Vagina (tissue), 2 donors: ENCODE measurements at regions of chr19 and their contacts with region 1.

Region 1: GRCh38 chr19:46860125-46860845 is 512 bp upstream of the ARHGAP35 start:
- DNase-seq: peak in 1 of 2 donors; percentile 98
- H3K4me3 ChIP-seq: peak overlapping the region; percentile 61 to 79
- H3K27ac ChIP-seq: peak overlapping the region; percentile 96
- H3K4me1 ChIP-seq: peaks cover 59% of the 10 kb centered on the region
- H3K27me3 ChIP-seq: no peaks in the 10 kb centered on the region
- CTCF ChIP-seq: no peak
- POLR2A ChIP-seq: peak in 1 of 2 donors; percentile 28

Region 2: GRCh38 chr19:46904114-46905060 is 44.1 kb after region 1 on chr19:
- intact Hi-C with region 1: loop called (anchors 5 kb)
- DNase-seq: no peak
- H3K4me3 ChIP-seq: no peak overlapping the region
- H3K27ac ChIP-seq: peak overlapping the region; percentile 45
- H3K4me1 ChIP-seq: peaks cover 82% of the 10 kb centered on the region
- H3K27me3 ChIP-seq: no peaks in the 10 kb centered on the region
- CTCF ChIP-seq: no peak
- POLR2A ChIP-seq: no peak

Region 3: DNA sequence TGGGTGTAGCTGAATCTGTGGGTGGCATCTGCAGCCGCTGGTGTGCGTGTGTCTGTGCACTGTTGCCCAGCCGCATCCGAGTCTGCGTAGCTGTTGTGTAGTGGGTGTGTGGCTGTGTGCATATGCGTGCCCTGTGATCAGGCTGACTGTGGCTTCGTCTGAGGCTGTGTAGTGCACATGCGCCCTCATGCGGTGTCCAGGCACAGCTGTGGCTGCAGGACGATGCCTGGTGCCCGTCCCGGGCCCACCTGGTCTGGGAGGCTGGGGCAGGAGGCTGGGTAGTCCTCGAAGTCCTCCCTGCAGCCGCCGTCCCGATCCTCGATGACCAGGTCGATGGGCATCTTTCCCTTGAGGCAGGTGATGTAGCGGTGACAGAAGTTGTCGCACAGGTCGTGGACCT is 554.2 kb after region 1 on chr19:
- intact Hi-C with region 1: no loop called
- DNase-seq: no peak
- H3K4me3 ChIP-seq: no peak overlapping the region
- H3K27ac ChIP-seq: no peak overlapping the region
- H3K4me1 ChIP-seq: peaks cover 19% of the 10 kb centered on the region
- H3K27me3 ChIP-seq: no peaks in the 10 kb centered on the region
- CTCF ChIP-seq: no peak
- POLR2A ChIP-seq: no peak